Activated naive CD4-positive, alpha-beta T cell treated with anti-CD3 and anti-CD28 coated beads for 36 hours (primary cell): ENCODE measurements at regions of chr1 and their contacts with region 1.

Region 1: GRCh38 chr1:93078986-93079654 is at the start of gene MTF2:
- DNase-seq: peak; percentile 96
- H3K4me3 Mint-ChIP-seq: peak within 1 kb of the TSS; percentile 94
- H3K27ac Mint-ChIP-seq: peak within 1 kb of the TSS; percentile 94
- H3K4me1 Mint-ChIP-seq: peaks cover 29% of the 10 kb centered on the region
- H3K27me3 Mint-ChIP-seq: no peaks in the 10 kb centered on the region
- total RNA-seq, gene MTF2: 51.0 to 56.6 TPM

Region 2: GRCh38 chr1:92858564-92859399 is 220.3 kb before region 1 on chr1:
- CTCF ChIA-PET with region 1: no interaction called
- intact Hi-C with region 1: loop called (anchors 1 kb)
- DNase-seq: peak; percentile 74
- H3K4me3 Mint-ChIP-seq: peak overlapping the region; percentile 63
- H3K27ac Mint-ChIP-seq: peak overlapping the region; percentile 60
- H3K4me1 Mint-ChIP-seq: peaks cover 19% of the 10 kb centered on the region
- H3K27me3 Mint-ChIP-seq: no peaks in the 10 kb centered on the region

Region 3: GRCh38 chr1:93042187-93043056 is 36.7 kb before region 1 on chr1:
- CTCF ChIA-PET with region 1: interaction called, 4 read pairs
- intact Hi-C with region 1: loop called (anchors 1 kb)
- DNase-seq: peak; percentile 38
- H3K4me3 Mint-ChIP-seq: peak overlapping the region; percentile 64
- H3K27ac Mint-ChIP-seq: peak overlapping the region; percentile 85
- H3K4me1 Mint-ChIP-seq: peaks cover 26% of the 10 kb centered on the region
- H3K27me3 Mint-ChIP-seq: no peaks in the 10 kb centered on the region

Region 4: GRCh38 chr1:93179886-93180722 is 101.0 kb after region 1 on chr1 and contains the start of gene TMED5:
- CTCF ChIA-PET with region 1: no interaction called
- intact Hi-C with region 1: loop called (anchors 1 kb)
- DNase-seq: peak; percentile 98
- H3K4me3 Mint-ChIP-seq: peak within 1 kb of the TSS; percentile 88
- H3K27ac Mint-ChIP-seq: peak within 1 kb of the TSS; percentile 99
- H3K4me1 Mint-ChIP-seq: peaks cover 49% of the 10 kb centered on the region
- H3K27me3 Mint-ChIP-seq: no peaks in the 10 kb centered on the region
- total RNA-seq, gene TMED5: 27.8 to 28.2 TPM

Region 5: DNA sequence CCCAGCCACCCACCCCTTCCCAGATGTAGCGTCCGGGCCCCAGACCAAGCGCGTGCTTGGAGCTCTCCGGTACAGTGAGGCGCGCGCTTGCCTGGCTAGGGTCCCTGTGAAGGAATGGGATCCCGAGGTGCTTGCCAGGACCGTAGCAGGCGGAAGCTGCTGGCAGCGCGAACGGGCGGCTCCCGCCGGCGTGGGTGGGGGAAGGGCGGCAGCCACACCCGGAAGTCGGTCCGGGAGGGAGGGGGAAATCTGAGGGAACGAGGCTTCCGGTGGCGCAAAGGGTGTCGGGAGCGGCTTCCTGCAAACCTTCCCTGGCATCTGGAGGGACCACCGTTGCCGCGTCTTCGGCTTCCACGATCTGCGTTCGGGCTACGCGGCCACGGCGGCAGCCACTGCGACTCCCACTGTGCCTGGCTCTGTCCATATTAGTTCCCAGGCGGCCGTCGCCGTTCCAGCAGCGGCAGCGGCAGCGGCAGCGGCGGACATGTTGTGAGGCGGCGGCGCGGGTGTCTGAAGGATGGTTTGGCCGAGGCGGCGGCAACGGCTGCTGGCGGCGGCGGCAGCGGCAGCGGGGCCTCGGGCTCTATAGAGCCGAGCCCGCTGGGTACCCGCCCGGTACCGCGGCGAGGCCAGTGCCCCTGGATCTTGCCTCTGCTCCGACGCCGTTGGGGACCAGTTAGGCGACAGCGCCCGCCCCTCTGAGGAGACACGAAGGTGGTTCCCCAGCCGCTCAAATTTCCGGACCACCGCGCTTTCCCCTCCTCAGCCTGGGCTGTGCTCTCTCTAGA is 266.7 kb after region 1 on chr1 and contains the start of gene DR1:
- CTCF ChIA-PET with region 1: interaction called, 3 read pairs
- intact Hi-C with region 1: loop called (anchors 1 kb)
- DNase-seq: peak; percentile 95
- H3K4me3 Mint-ChIP-seq: peak within 1 kb of the TSS; percentile 83
- H3K27ac Mint-ChIP-seq: peak within 1 kb of the TSS; percentile 96
- H3K4me1 Mint-ChIP-seq: peaks cover 25% of the 10 kb centered on the region
- H3K27me3 Mint-ChIP-seq: no peaks in the 10 kb centered on the region
- total RNA-seq, gene DR1: 76.3 to 80.3 TPM

Region 6: DNA sequence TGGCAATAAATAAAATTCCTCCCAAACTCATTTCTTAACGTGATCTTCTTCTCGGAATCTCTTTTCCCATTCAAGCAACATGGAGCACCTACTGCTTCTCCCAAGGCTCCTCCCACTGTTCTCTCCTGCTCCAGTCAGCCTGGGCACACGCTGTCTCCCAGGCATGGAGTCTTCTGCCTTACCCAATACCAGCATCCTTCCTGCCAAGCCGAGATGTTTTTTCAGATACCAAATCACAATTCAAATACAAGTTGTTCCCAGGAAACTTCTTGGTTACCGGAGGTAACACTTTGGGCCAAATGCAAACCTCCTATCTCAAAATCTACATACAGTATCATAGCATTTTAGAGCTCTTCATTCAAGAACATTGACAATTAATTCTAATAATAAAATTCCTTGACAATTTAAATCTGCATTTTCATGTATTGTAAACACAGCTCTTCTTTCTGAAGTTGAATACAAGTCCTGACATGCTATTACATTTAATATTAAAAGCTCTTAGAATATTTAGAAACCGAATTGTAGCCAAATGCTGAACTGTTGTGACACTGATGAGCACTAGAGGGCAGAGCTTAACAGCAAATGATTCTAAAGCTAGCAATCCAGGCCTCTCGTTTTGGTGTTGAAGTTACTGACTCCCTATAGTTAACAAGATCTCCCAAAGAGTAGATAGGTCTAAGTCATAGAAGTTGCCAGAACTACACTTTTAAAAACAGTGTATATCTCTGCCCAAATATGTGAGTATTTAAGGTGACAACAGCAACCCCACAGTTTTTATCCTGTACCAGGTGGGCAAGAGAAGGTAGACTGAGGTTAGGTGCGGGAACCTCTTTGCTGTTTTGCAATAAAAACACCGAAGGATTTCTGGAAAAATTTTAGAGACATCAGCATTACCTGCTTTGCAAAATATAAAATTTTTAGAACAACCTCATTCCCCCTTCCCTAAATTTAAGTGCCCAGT is 550.3 kb after region 1 on chr1:
- CTCF ChIA-PET with region 1: no interaction called
- intact Hi-C with region 1: loop called (anchors 2 kb)
- DNase-seq: peak; percentile 69
- H3K4me3 Mint-ChIP-seq: no peak overlapping the region
- H3K27ac Mint-ChIP-seq: no peak overlapping the region
- H3K4me1 Mint-ChIP-seq: no peaks in the 10 kb centered on the region
- H3K27me3 Mint-ChIP-seq: no peaks in the 10 kb centered on the region